ENCODE measurements at regions of chr12 and their contacts with region 1.

Region 1: DNA sequence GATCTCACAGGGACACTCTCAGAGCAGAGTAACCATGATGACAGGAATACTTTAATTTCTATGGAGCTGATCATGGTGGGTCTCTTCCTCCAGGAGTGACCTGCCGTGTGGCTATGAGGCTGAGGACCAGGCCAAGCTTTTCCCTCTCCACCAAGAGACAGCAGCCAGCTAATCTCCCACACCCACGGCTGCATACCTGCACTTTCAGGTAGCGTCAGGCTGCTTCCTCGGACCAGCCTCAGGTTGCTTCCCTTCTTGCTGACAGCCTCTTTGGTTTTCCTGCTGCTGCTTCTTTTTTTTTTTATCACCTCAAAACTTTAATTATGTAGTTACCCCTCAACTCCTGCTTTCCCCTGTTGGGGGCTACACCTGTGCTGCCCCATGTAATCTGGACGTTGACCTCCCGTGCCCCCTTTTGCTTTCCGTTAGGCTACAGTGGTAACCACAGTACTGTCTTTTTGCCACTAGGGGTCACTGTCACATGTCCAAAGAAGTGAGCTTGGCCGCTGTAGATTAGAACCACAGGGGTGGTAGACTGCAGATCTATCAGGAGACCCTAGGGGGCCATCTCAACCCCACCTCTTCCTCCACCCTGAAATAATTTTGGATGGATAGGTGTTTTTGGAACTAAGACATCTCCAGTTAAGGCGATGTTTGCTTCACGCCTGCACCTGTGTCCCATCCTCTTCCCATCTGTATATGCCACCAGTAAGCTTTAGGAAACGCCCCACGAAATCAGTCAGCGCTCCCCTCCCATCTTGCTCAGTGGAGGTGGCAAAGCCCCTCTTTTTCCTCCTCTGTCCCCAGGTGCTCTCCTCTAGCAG is 7.8 kb upstream of the PIP4K2C start:
- DNase-seq: no peak
- H3K4me3 ChIP-seq: no peak overlapping the region
- CTCF ChIP-seq: peak; percentile 85

Region 2: GRCh38 chr12:57368349-57369095 is 214.7 kb before region 1 on chr12:
- CTCF ChIA-PET with region 1: no interaction called
- POLR2A ChIA-PET with region 1: no interaction called
- DNase-seq: no peak
- H3K4me3 ChIP-seq: no peak overlapping the region
- CTCF ChIP-seq: no peak

Region 3: DNA sequence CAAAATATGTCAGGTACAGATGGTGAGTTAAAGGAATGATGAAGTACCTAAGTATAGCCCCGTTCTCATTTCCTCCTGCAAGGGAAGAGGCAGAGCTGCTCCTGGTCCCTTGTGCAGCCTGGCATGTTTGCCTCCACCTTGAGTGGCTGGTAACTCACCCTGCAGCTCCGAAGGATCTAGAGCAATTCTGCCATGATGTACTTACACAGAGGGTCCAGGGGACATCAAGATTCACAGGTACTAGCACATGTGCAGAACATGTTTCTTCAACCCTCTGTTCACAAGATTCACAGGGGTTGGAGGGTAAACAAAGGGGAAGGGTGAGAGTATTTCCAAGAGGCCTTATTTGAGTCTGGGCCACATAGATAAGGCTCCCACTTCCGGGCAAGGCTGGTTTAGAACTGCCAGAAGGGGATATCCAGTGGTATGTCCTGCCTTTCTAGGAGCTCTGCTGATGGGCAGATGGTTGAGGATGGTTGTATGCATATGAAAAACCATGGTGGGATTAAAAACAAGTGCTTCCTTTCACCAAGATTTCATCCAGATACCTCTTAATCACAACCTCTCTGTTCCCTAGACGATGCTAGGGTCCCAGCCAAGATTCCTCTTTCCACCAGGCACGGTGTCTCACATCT is 44.0 kb before region 1 on chr12:
- CTCF ChIA-PET with region 1: interaction called, 11 read pairs
- POLR2A ChIA-PET with region 1: no interaction called
- DNase-seq: no peak
- H3K4me3 ChIP-seq: no peak overlapping the region
- CTCF ChIP-seq: no peak

Region 4: GRCh38 chr12:57604454-57604991 is 21.3 kb after region 1 on chr12 and contains the start of gene DTX3:
- CTCF ChIA-PET with region 1: interaction called, 212 read pairs
- POLR2A ChIA-PET with region 1: interaction called, 3 read pairs
- DNase-seq: no peak
- H3K4me3 ChIP-seq: peak within 1 kb of the TSS; percentile 71
- CTCF ChIP-seq: no peak

Region 5: DNA sequence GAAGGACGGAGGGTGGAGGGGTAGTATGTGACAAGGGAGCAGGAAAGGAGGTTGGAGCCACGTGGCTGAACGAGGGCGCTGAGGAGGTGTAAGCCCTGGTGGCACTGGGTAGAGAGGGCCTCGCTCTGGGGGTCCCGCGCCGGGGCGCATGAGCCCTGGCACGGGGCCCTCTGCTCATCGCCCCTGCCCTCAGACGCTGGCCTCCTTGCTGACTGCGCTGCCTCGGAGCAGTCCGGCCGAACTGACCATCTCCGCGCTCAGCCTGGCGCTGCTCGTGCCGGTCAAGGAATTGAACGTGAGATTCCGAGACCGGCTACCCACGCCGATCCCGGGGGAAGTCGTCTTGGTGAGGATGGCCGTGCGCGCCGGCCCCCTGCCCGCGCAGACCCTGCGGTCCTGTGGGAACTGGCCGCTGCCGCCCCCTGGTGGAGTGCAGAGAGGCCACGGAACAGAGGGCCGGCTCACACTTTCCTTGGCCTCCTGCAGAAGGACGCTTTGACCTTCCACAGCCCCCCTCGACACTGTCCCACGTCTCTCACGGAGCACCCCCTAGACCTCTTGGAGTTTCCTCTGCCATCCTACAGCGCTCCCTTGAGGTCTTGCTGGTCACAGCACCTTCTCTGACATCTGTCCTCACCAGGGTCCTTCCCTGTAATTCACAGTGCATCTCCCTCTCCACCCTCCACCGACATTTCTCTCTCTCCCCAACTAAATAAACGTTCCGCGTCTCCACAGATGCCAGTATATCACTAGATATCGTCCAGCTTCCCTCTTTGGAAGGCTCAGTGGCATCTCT is 38.5 kb after region 1 on chr12:
- CTCF ChIA-PET with region 1: interaction called, 186 read pairs
- POLR2A ChIA-PET with region 1: no interaction called
- DNase-seq: no peak
- H3K4me3 ChIP-seq: peak overlapping the region; percentile 50
- CTCF ChIP-seq: peak; percentile 92

Region 6: DNA sequence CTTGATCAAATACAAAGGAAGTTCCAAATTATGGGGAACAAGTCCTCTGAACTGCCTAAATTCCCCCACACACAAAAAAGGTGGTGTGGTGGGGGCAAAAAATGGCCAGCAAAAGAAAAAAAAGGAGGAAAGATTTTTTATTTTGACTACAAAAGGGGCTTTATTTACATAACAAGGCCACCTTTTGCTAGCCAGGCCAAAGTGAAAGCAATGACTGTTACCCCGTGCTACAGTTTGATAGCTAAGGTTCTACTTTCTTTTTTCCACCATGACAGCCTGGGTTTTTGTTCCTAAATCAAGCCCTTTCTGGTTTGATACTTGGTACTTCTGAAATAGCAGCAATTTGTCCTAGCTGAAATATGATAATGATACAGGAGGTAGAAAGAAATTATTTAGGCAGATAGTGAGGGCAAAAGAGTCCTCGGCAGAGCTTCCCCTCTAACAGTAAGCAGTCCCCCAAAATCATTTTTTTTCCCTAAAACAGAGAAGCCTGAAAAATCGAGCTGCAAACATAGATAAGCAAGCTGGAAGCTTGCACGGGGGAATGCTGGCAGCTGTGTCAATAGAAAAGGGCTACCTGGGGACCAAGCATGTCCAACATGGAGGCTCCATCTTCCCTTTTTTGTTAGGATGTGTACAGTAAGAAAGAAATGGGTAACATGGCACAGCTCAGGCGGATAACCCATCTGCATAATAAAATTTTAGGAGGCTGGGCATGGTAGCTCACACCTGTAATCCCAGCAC is 58.7 kb after region 1 on chr12:
- CTCF ChIA-PET with region 1: interaction called, 41 read pairs
- POLR2A ChIA-PET with region 1: no interaction called
- DNase-seq: no peak
- H3K4me3 ChIP-seq: no peak overlapping the region
- CTCF ChIP-seq: no peak

Region 7: DNA sequence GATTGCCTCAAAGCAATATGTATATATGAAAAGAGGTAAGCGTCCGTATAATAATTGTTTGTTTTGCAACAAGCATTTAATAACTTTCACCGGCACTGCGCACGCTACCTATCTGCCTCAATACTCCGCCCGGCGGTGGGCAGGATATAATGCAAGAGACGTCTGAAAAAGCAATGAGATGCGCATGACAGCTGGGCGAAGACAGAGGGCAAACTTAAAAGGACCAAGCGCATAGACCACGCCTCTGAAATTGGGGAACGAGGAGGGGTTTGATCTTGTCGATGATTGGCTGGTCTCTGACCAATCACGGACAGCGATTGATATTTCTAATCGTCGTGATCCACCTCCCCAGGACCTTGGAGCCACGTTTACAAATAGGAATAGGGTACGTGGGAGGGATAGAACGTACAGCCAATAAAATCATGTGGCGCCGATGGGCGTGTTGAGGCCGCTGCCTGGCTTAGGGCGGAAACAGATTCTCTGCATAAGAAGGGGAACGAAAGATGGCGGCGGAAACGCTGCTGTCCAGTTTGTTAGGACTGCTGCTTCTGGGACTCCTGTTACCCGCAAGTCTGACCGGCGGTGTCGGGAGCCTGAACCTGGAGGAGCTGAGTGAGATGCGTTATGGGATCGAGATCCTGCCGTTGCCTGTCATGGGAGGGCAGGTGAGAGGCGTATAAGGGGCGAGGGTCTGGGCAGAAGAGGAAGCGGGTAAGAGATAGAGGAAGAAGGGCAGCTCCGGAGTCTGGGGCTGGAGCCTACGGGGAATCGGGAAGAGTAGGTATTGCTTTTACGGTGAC is 110.6 kb after region 1 on chr12 and contains the start of gene OS9:
- CTCF ChIA-PET with region 1: interaction called, 21 read pairs
- POLR2A ChIA-PET with region 1: no interaction called
- DNase-seq: peak; percentile 99
- H3K4me3 ChIP-seq: peak within 1 kb of the TSS; percentile 92
- CTCF ChIP-seq: peak; percentile 69

Region 8: DNA sequence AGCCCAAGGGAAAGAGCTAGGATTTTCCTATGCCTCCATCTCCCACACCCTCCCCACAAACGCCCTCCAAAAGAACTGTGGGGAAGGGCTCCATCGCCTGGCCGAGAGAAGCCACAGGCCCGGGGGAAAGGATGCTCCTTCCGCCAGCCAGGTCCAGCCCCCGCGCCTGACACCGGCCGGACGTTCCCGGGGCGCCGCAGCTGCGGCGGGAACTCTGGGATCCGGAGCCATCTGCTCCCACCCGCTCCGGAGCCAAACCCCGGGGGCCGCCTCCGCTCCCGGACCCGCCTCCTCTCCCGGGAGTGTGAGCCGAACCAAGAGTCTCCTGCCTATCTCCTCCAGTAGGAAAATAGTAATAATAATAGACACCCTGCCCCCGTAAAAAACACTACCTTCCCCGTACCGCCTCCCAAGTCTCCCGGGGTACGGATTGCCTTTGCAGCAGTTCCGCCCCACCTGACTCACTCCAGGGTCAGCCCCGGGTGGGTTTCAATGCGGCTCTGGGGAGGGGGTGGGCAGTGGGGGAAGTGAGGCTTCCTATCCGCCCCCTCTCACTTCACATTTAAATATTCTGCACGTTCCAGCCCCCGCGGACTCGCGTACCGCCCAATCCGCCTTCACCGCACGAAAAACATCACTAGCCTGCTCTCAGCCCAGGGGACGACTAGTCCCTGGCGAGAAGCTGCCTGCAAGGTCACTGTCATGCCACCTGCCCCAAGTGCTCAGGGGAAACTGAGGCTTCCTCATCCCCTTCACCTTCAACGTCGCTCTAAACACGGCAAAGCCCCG is 152.9 kb after region 1 on chr12:
- CTCF ChIA-PET with region 1: interaction called, 36 read pairs
- POLR2A ChIA-PET with region 1: no interaction called
- DNase-seq: no peak
- H3K4me3 ChIP-seq: peak overlapping the region; percentile 36
- CTCF ChIP-seq: peak; percentile 68

Measured in AG04449 (cell line).